ENCODE measurements at regions of chr11 and their contacts with region 1.

Region 1: DNA sequence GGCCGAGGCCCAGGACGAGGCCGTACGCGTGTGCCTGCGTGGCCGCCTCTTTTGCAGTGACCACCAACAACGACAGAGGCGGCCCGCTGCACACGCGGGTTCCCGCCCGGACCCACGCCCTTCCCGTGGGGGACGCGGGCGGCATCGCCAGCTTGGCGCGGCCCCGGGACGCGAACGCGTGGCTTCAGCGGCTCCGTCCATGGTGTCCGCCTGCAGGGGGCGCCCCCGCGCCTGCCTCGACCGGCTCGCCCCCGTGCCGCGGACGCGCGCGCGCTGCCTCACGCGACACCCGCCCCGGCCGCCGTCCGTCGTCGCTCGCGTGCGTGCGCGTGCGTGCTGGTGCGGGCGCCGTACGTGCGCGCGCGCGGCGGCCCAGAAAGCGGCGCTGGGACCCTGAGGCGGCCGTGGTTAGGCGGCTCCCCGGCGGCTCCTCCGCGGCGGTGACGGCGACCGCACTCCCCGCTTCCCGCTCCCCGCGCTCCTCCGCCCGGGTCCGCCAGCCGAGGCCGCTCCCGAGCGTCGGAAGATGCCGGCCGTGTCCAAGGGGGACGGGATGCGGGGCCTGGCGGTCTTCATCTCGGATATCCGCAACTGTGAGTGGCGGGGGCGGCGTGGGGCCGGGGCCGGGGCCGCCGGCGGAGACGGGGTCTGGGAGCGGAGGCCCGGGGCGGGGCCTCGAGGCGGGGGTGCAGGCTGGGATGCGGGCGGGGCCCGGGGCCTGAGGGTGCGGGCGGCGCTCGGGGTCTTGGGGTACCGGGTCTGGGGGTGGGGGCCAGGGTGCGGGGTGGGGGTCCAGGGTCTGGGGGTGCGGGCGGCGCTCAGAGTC is at the start of gene AP2A2:
- DNase-seq: peak; percentile 87
- H3K4me3 Mint-ChIP-seq: peak within 1 kb of the TSS; percentile 81
- H3K27ac Mint-ChIP-seq: peak within 1 kb of the TSS; percentile 82
- H3K4me1 Mint-ChIP-seq: peaks cover 30% of the 10 kb centered on the region
- H3K27me3 Mint-ChIP-seq: no peaks in the 10 kb centered on the region
- total RNA-seq, gene AP2A2: 34.6 to 36.6 TPM

Region 2: GRCh38 chr11:575996-576768 is 349.5 kb before region 1 on chr11 and contains the start of gene PHRF1:
- CTCF ChIA-PET with region 1: no interaction called
- intact Hi-C with region 1: no loop called
- DNase-seq: peak; percentile 96
- H3K4me3 Mint-ChIP-seq: peak within 1 kb of the TSS; percentile 88
- H3K27ac Mint-ChIP-seq: peak within 1 kb of the TSS; percentile 99
- H3K4me1 Mint-ChIP-seq: peaks cover 48% of the 10 kb centered on the region
- H3K27me3 Mint-ChIP-seq: peaks cover 6% of the 10 kb centered on the region
- total RNA-seq, gene PHRF1: 25.6 to 26.1 TPM

Region 3: GRCh38 chr11:842370-843002 is 83.2 kb before region 1 on chr11 and contains the starts of genes POLR2L and TSPAN4:
- CTCF ChIA-PET with region 1: no interaction called
- intact Hi-C with region 1: loop called (anchors 5 kb)
- DNase-seq: peak; percentile 88
- H3K4me3 Mint-ChIP-seq: peak within 1 kb of the TSS; percentile 84
- H3K27ac Mint-ChIP-seq: peak within 1 kb of the TSS; percentile 75
- H3K4me1 Mint-ChIP-seq: peaks cover 27% of the 10 kb centered on the region
- H3K27me3 Mint-ChIP-seq: no peaks in the 10 kb centered on the region
- total RNA-seq, gene POLR2L: 68.1 to 68.2 TPM
- total RNA-seq, gene TSPAN4: 5.0 to 6.3 TPM

Region 4: DNA sequence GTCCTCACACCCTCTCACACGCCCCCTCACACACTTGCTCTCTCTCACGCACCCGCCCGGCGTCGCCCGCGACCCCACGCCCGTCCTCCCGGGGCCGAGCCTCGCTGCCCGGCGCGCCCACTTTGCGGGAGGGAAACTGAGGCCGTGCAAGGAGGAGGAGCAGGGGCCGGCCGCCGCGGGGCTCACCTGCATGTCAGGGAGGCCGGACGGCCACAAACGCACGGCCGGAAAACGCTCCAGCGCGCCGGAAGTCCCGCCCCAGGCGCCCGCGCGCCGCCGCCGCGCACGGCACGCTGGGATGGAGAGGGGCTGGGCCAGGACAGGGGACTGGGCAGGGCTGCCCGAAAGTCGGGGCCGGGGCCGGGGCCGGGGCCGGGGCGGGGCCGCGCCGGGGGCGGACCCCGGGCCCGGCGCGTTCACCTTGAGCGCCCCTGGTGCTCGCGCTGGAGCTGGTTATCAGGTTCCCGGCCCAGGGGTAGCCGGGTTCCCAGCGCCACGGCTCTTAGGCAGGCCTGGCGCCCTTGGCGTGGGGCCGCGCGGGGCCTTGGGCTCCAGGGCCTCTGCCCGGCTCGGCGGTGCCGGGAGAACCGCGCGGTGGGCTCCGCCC is 15.0 kb before region 1 on chr11 and contains the start of gene CHID1:
- CTCF ChIA-PET with region 1: interaction called, 9 read pairs
- intact Hi-C with region 1: loop called (anchors 1 kb)
- DNase-seq: peak; percentile 87
- H3K4me3 Mint-ChIP-seq: peak within 1 kb of the TSS; percentile 91
- H3K27ac Mint-ChIP-seq: peak within 1 kb of the TSS; percentile 65
- H3K4me1 Mint-ChIP-seq: peaks cover 24% of the 10 kb centered on the region
- H3K27me3 Mint-ChIP-seq: no peaks in the 10 kb centered on the region
- total RNA-seq, gene CHID1: 51.8 to 56.3 TPM

Region 5: DNA sequence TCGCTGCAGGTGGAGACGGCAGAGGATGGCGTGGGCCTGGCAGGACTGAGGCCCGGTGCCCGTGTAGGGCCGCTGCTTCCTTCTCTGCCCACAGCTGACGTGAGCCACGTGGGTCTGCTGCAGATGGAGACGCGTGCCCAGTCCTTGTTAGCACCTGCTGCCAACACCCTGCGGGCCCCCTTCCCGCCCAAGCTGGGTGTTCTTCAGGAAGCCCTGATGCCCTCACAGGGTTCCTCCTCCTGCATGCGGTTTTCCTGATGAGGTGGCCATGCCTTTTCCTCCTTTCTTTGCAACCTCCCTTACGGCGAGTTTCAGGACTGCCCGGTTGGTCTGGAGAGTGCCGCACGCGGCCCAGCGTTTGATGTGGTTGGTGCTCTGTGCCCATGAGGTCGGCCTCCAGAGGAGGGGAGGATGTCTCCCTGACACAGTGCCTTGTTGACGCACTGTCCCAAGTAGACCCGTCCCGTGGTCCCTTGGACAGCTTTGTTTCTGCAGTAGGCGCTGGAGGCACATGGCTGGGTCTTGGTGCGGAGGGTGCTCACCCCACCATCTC is 44.7 kb after region 1 on chr11:
- CTCF ChIA-PET with region 1: interaction called, 3 read pairs
- intact Hi-C with region 1: loop called (anchors 5 kb)
- DNase-seq: peak; percentile 49
- H3K4me3 Mint-ChIP-seq: no peak overlapping the region
- H3K27ac Mint-ChIP-seq: peak overlapping the region; percentile 31
- H3K4me1 Mint-ChIP-seq: peaks cover 28% of the 10 kb centered on the region
- H3K27me3 Mint-ChIP-seq: no peaks in the 10 kb centered on the region

Region 6: GRCh38 chr11:1029654-1030053 is 103.9 kb after region 1 on chr11:
- CTCF ChIA-PET with region 1: no interaction called
- intact Hi-C with region 1: no loop called
- DNase-seq: no peak
- H3K4me3 Mint-ChIP-seq: no peak overlapping the region
- H3K27ac Mint-ChIP-seq: no peak overlapping the region
- H3K4me1 Mint-ChIP-seq: no peaks in the 10 kb centered on the region
- H3K27me3 Mint-ChIP-seq: no peaks in the 10 kb centered on the region

Region 7: DNA sequence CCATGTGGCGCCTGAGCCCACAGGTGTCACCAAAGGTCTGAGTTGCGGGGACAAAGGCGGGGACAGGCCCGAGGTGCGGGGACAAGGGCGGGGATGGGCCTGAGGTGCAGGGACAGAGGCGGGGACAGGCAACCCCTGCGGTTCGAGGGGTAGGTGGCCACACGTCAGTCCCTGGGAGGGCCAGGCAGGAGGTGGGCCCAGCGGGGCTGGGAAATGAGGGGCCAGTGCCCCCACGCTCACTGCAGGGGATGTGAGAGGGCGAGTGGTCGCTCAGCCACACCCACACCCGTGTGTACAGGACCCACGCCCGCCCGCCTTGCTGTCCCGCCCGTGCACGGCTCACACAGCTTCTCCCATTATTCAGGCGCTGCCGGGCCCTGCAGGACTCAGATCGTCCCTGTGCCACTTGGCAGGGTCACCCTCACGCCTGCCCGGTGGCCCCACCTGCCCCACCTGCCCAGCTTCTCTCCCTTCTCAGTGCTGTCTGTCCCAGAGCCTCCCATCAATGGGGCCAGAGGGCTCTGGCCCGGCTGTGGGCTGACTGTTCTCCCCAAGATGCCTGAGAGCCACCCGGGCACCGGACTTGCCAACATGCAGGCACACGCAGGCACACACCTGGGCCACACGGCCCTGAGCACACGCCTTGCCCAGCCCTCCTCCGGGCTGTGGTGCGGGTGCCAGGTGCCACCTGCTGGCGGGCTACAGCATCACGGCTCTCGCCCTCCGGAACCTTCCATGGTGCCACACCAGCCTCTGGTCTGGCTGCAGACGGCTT is 125.1 kb after region 1 on chr11:
- CTCF ChIA-PET with region 1: interaction called, 5 read pairs
- intact Hi-C with region 1: loop called (anchors 1 kb)
- DNase-seq: peak; percentile 82
- H3K4me3 Mint-ChIP-seq: no peak overlapping the region
- H3K27ac Mint-ChIP-seq: no peak overlapping the region
- H3K4me1 Mint-ChIP-seq: peaks cover 2% of the 10 kb centered on the region
- H3K27me3 Mint-ChIP-seq: peaks cover 18% of the 10 kb centered on the region

Region 8: GRCh38 chr11:1233331-1233715 is 307.6 kb after region 1 on chr11:
- CTCF ChIA-PET with region 1: interaction called, 10 read pairs
- intact Hi-C with region 1: no loop called
- DNase-seq: no peak
- H3K4me3 Mint-ChIP-seq: no peak overlapping the region
- H3K27ac Mint-ChIP-seq: no peak overlapping the region
- H3K4me1 Mint-ChIP-seq: no peaks in the 10 kb centered on the region
- H3K27me3 Mint-ChIP-seq: no peaks in the 10 kb centered on the region